Activated CD4-positive, alpha-beta memory T cell treated with anti-CD3 and anti-CD28 coated beads for 36 hours (primary cell): ENCODE measurements at regions of chr17 and their contacts with region 1.

Region 1: GRCh38 chr17:8016632-8017478 is 14.4 kb downstream of the GUCY2D start:
- DNase-seq: peak; percentile 76
- H3K4me3 Mint-ChIP-seq: peak overlapping the region; percentile 62
- H3K27ac Mint-ChIP-seq: no peak overlapping the region
- H3K4me1 Mint-ChIP-seq: peaks cover 12% of the 10 kb centered on the region
- H3K27me3 Mint-ChIP-seq: peaks cover 8% of the 10 kb centered on the region

Region 2: DNA sequence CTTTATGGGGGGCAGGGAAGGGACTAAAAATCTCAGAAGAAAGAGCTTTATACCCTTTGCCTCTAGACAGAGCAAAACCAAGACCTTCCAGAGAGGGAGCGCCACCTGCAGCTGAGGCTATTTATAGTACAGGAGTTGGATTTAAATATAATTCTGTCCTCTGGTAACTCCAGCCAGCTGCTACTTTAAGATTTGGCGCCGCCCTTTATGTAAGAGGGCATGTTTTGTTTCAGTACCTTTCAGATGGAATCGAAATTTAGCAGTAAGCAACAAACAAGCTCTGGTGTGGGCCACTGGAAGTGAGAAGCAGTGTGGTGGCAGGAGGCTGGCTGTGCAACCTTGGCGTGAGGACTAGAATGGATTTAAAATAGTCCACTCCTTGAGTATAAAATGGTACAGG is 19.7 kb before region 1 on chr17:
- CTCF ChIA-PET with region 1: interaction called, 13 read pairs
- POLR2A ChIA-PET with region 1: no interaction called
- intact Hi-C with region 1: no loop called
- DNase-seq: peak; percentile 61
- H3K4me3 Mint-ChIP-seq: no peak overlapping the region
- H3K27ac Mint-ChIP-seq: no peak overlapping the region
- H3K4me1 Mint-ChIP-seq: peaks cover 4% of the 10 kb centered on the region
- H3K27me3 Mint-ChIP-seq: peaks cover 15% of the 10 kb centered on the region